Naive thymus-derived CD4-positive, alpha-beta T cell (primary cell): ENCODE measurements at regions of chr3 and their contacts with region 1.

Region 1: GRCh38 chr3:69161587-69162307 is 39.4 kb upstream of the LMOD3 start:
- DNase-seq: peak in 7 of 9 donors; percentile 22 to 62 (median 55)
- ATAC-seq: peak; percentile 84
- H3K4me3 ChIP-seq: no peak overlapping the region
- H3K4me3 Mint-ChIP-seq: no peak overlapping the region
- H3K27ac ChIP-seq: no peak overlapping the region
- H3K27ac Mint-ChIP-seq: no peak overlapping the region
- H3K4me1 ChIP-seq: no peaks in the 10 kb centered on the region
- H3K4me1 Mint-ChIP-seq: peaks cover 0 to 15% (median 0%) of the 10 kb centered on the region in 7 donors
- H3K27me3 ChIP-seq: no peaks in the 10 kb centered on the region
- H3K27me3 Mint-ChIP-seq: peaks cover 0 to 12% (median 0%) of the 10 kb centered on the region in 5 donors

Region 2: DNA sequence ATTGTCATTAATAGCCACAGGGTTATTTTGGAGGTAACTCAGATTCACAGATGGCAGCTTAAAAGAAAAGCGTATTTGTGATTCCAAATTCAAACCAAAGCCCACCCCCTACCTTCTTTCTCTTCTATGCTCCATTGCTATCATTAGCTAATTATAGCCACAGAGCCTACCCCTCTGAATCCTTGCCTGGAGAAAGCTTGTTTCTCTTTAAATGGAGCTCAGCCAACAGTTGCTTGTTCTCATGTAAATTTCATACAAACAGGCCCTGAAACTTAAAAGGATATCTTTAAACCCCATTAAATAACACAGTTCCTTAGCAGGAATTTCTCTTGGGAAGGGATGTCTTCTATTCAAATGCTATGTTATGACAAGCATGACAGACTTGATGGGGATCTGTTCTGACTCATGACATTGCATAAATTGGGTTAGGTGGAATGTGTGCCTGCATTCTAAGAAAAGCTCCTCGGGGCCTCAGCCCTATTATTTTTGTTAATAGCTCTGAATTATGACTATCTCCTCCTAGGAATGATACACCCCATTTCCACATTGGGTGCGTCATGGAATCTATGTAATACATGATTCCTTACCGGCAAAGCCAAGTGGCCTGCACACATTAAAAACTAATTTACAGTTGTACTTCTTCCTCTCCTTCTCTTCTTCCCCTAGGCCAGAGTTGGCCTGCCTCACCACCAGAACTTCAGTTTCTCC is 495.2 kb before region 1 on chr3:
- CTCF ChIA-PET with region 1: no interaction called
- POLR2A ChIA-PET with region 1: no interaction called
- intact Hi-C with region 1: no loop called
- DNase-seq: no peak
- ATAC-seq: no peak
- H3K4me3 ChIP-seq: no peak overlapping the region
- H3K4me3 Mint-ChIP-seq: no peak overlapping the region
- H3K27ac ChIP-seq: no peak overlapping the region
- H3K27ac Mint-ChIP-seq: no peak overlapping the region
- H3K4me1 ChIP-seq: no peaks in the 10 kb centered on the region
- H3K4me1 Mint-ChIP-seq: no peaks in the 10 kb centered on the region
- H3K27me3 ChIP-seq: no peaks in the 10 kb centered on the region
- H3K27me3 Mint-ChIP-seq: no peaks in the 10 kb centered on the region

Region 3: GRCh38 chr3:69200384-69201068 is 38.8 kb after region 1 on chr3:
- CTCF ChIA-PET with region 1: interaction called, 10 read pairs
- POLR2A ChIA-PET with region 1: no interaction called
- intact Hi-C with region 1: loop called in 1 of 2 experiments (anchors 5 kb)
- DNase-seq: peak in 2 of 9 donors; percentile 6 to 51
- ATAC-seq: no peak
- H3K4me3 ChIP-seq: peak overlapping the region; percentile 70
- H3K4me3 Mint-ChIP-seq: peak overlapping the region; percentile 70 to 91 (median 86)
- H3K27ac ChIP-seq: no peak overlapping the region
- H3K27ac Mint-ChIP-seq: peak overlapping the region; percentile 7 to 93 (median 86)
- H3K4me1 ChIP-seq: peaks cover 14 to 22% of the 10 kb centered on the region in 2 donors
- H3K4me1 Mint-ChIP-seq: peaks cover 13 to 71% (median 43%) of the 10 kb centered on the region in 7 donors
- H3K27me3 ChIP-seq: no peaks in the 10 kb centered on the region
- H3K27me3 Mint-ChIP-seq: no peaks in the 10 kb centered on the region

Region 4: DNA sequence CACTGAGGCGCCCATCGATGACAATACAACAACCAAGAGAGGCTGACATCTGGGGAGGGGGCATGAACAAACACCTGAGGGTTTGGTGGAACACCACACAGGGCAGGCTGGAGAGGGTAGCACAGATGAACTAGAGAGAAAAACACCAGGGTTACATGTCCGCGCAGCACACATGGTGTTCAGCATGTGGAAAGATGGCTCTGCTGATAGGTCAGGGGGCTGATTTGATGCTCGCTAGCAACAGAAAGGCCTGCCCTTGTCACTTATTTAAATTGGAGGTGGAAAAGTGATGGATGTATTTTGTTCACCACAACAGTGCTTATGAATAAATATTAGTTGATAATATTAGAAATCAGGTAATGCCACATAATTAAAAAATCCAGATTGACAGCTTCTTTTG is 156.7 kb after region 1 on chr3:
- CTCF ChIA-PET with region 1: interaction called, 13 read pairs
- POLR2A ChIA-PET with region 1: no interaction called
- intact Hi-C with region 1: no loop called
- DNase-seq: no peak
- ATAC-seq: no peak
- H3K4me3 ChIP-seq: no peak overlapping the region
- H3K4me3 Mint-ChIP-seq: no peak overlapping the region
- H3K27ac ChIP-seq: no peak overlapping the region
- H3K27ac Mint-ChIP-seq: no peak overlapping the region
- H3K4me1 ChIP-seq: no peaks in the 10 kb centered on the region
- H3K4me1 Mint-ChIP-seq: peaks cover 0 to 6% (median 0%) of the 10 kb centered on the region in 7 donors
- H3K27me3 ChIP-seq: no peaks in the 10 kb centered on the region
- H3K27me3 Mint-ChIP-seq: no peaks in the 10 kb centered on the region

Region 5: GRCh38 chr3:69425261-69425660 is 263.5 kb after region 1 on chr3:
- CTCF ChIA-PET with region 1: interaction called, 3 read pairs
- POLR2A ChIA-PET with region 1: no interaction called
- intact Hi-C with region 1: loop called (anchors 1 kb)
- DNase-seq: peak in 5 of 9 donors; percentile 3 to 20 (median 10)
- ATAC-seq: no peak
- H3K4me3 ChIP-seq: no peak overlapping the region
- H3K4me3 Mint-ChIP-seq: no peak overlapping the region
- H3K27ac ChIP-seq: no peak overlapping the region
- H3K27ac Mint-ChIP-seq: no peak overlapping the region
- H3K4me1 ChIP-seq: no peaks in the 10 kb centered on the region
- H3K4me1 Mint-ChIP-seq: peaks cover 0 to 5% (median 0%) of the 10 kb centered on the region in 7 donors
- H3K27me3 ChIP-seq: no peaks in the 10 kb centered on the region
- H3K27me3 Mint-ChIP-seq: peaks cover 0 to 4% (median 0%) of the 10 kb centered on the region in 5 donors

Region 6: GRCh38 chr3:70358978-70359580 is 1197.3 kb after region 1 on chr3:
- CTCF ChIA-PET with region 1: no interaction called
- POLR2A ChIA-PET with region 1: no interaction called
- intact Hi-C with region 1: loop called in 1 of 2 experiments (anchors 10 kb)
- DNase-seq: peak in 1 of 9 donors; percentile 9
- ATAC-seq: no peak
- H3K4me3 ChIP-seq: no peak overlapping the region
- H3K4me3 Mint-ChIP-seq: no peak overlapping the region
- H3K27ac ChIP-seq: no peak overlapping the region
- H3K27ac Mint-ChIP-seq: no peak overlapping the region
- H3K4me1 ChIP-seq: no peaks in the 10 kb centered on the region
- H3K4me1 Mint-ChIP-seq: no peaks in the 10 kb centered on the region
- H3K27me3 ChIP-seq: no peaks in the 10 kb centered on the region
- H3K27me3 Mint-ChIP-seq: peaks cover 0 to 2% (median 0%) of the 10 kb centered on the region in 5 donors